ENCODE measurements at regions of chr1 and their contacts with region 1.

Region 1: DNA sequence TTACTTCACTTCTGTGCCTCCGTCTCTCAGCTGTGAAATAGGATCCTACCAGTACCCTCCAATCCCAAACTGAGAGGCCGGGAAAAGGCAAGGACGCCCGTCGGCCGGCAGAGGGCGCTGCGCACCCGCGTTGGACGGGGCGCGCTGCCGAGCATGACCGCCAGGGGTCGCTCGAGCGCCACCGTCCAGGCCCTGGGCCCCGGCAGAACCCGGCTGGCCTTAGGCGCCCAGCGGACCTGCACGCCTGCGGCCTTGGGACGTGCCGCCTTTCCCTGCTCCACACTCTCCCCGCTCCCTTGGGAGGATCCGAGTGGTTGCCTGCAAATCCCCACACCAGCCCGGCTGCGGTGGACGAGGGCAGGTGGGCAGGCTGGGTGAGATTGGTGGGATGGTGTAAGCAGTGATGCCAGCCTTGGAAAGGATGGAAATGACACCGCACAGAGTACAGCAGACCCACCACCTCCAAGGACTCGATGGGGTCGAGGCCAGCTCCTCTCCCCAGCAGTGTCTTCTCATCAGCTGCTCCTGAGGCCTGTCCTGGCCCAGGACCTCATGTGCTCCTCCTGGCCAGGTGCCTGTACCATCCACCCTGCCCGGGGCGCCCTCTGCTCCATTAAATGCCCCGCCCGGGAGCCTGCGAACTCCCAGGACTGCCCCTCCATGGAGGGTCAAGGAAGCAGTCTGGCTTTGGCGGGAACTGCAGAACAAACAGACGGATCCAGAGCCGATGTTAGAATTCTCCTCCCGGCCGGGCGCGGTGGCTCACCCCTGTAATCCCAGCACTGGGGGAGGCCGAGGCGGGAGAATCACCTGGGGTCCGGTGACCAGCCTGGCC is 47.4 kb upstream of the LBR start:
- DNase-seq: peak; percentile 51 to 79
- H3K4me3 ChIP-seq: no peak overlapping the region
- H3K4me1 ChIP-seq: peaks cover 5% of the 10 kb centered on the region
- H3K27me3 ChIP-seq: no peaks in the 10 kb centered on the region

Region 2: GRCh38 chr1:225304996-225305395 is 170.2 kb before region 1 on chr1:
- in situ Hi-C with region 1: no loop called
- DNase-seq: no peak
- H3K4me3 ChIP-seq: no peak overlapping the region
- H3K4me1 ChIP-seq: no peaks in the 10 kb centered on the region
- H3K27me3 ChIP-seq: no peaks in the 10 kb centered on the region

Region 3: GRCh38 chr1:225777583-225778336 is 302.6 kb after region 1 on chr1 and contains the start of gene SRP9:
- in situ Hi-C with region 1: loop called (anchors 5 kb)
- DNase-seq: peak; percentile 98 to 100
- H3K4me3 ChIP-seq: peak within 1 kb of the TSS; percentile 95
- H3K4me1 ChIP-seq: peaks cover 24% of the 10 kb centered on the region
- H3K27me3 ChIP-seq: no peaks in the 10 kb centered on the region

Region 4: GRCh38 chr1:225980005-225980836 is 505.0 kb after region 1 on chr1:
- in situ Hi-C with region 1: loop called (anchors 5 kb)
- DNase-seq: no peak
- H3K4me3 ChIP-seq: no peak overlapping the region
- H3K4me1 ChIP-seq: no peaks in the 10 kb centered on the region
- H3K27me3 ChIP-seq: no peaks in the 10 kb centered on the region

Measured in HAP-1 (cell line).